ENCODE measurements at regions of chr11 and their contacts with region 1.

Region 1: GRCh38 chr11:20127671-20128527 is 32.4 kb downstream of the DBX1 start:
- DNase-seq: peak in 1 of 2 donors; percentile 84
- H3K4me3 ChIP-seq: no peak overlapping the region
- H3K27ac ChIP-seq: peak overlapping the region in 1 of 2 donors; percentile 17
- H3K4me1 ChIP-seq: peaks cover 0 to 2% of the 10 kb centered on the region in 2 donors
- H3K27me3 ChIP-seq: no peaks in the 10 kb centered on the region
- CTCF ChIP-seq: peak; percentile 82 to 86 (median 84)

Region 2: GRCh38 chr11:19903620-19904069 is 224.3 kb before region 1 on chr11:
- intact Hi-C with region 1: loop called (anchors 5 kb)
- DNase-seq: peak in 1 of 2 donors; percentile 83
- H3K4me3 ChIP-seq: no peak overlapping the region
- H3K27ac ChIP-seq: peak overlapping the region; percentile 19 to 37
- H3K4me1 ChIP-seq: peaks cover 0 to 33% of the 10 kb centered on the region in 2 donors
- H3K27me3 ChIP-seq: no peaks in the 10 kb centered on the region
- CTCF ChIP-seq: peak; percentile 48 to 76 (median 71)

Region 3: DNA sequence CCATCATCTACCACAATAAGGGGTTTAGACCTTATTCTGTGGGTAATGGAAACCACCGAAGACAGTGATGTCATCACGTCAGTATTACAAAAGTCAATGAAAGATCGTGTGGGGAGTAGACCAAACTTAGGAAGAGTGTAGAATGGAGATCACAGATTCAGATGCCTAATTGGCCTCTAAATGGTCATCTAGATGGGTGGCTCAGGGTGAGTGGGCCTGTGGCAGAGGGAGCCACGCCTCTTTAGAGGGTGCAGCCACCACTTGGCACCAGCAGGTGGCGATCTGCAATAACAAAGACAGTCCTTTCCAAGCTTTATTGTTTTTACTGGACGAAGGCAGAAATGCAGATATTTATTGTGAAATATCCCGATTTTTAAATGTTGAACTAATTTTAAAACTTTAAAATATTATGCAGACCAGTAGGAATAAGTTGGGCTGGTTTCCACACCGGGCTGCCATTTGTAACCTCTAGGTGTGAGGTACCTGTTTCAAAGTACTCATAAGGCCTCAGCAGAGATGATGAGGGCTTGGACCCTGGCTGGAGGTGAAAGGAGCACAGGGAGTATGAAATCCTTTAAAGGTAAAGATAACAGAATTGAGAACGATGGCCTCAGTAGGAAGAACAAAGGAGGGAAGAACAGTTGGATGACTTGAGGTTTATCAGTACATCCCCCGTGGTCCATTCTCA is 189.6 kb before region 1 on chr11:
- intact Hi-C with region 1: loop called (anchors 5 kb)
- DNase-seq: peak in 1 of 2 donors; percentile 78
- H3K4me3 ChIP-seq: no peak overlapping the region
- H3K27ac ChIP-seq: peak overlapping the region in 1 of 2 donors; percentile 15
- H3K4me1 ChIP-seq: peaks cover 11 to 28% of the 10 kb centered on the region in 2 donors
- H3K27me3 ChIP-seq: no peaks in the 10 kb centered on the region
- CTCF ChIP-seq: peak; percentile 43 to 85 (median 77)

Region 4: DNA sequence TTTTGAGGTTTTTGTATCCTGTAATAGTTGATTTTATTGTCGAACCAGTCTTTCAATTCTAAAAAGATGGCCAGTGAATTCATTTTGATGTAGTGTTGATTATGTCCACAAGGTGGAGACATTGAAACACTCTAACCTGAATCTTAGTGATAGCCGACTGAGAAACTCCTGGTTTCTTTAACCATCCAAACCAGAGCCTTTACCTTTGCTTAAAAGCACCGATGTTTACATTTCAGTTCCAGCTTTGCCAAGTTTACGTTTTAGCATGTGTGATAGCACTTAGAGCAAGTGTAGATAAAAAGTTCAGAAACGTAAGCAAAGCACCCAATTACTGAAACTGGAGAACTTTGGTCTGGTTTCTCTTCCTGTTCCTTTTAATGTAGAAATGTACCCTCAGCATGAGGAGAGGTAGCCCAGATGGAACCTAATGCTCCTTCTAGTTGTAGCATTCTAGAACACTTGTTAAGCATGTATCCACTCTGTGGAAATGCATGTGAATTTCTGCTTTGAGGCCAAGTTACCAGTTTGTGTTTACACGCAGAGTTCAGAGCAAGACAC is 176.3 kb before region 1 on chr11:
- intact Hi-C with region 1: loop called (anchors 2 kb)
- DNase-seq: no peak
- H3K4me3 ChIP-seq: peak overlapping the region in 1 of 2 donors; percentile 7
- H3K27ac ChIP-seq: peak overlapping the region in 1 of 2 donors; percentile 67
- H3K4me1 ChIP-seq: peaks cover 14 to 42% of the 10 kb centered on the region in 2 donors
- H3K27me3 ChIP-seq: no peaks in the 10 kb centered on the region
- CTCF ChIP-seq: peak; percentile 56 to 65 (median 62)

Region 5: DNA sequence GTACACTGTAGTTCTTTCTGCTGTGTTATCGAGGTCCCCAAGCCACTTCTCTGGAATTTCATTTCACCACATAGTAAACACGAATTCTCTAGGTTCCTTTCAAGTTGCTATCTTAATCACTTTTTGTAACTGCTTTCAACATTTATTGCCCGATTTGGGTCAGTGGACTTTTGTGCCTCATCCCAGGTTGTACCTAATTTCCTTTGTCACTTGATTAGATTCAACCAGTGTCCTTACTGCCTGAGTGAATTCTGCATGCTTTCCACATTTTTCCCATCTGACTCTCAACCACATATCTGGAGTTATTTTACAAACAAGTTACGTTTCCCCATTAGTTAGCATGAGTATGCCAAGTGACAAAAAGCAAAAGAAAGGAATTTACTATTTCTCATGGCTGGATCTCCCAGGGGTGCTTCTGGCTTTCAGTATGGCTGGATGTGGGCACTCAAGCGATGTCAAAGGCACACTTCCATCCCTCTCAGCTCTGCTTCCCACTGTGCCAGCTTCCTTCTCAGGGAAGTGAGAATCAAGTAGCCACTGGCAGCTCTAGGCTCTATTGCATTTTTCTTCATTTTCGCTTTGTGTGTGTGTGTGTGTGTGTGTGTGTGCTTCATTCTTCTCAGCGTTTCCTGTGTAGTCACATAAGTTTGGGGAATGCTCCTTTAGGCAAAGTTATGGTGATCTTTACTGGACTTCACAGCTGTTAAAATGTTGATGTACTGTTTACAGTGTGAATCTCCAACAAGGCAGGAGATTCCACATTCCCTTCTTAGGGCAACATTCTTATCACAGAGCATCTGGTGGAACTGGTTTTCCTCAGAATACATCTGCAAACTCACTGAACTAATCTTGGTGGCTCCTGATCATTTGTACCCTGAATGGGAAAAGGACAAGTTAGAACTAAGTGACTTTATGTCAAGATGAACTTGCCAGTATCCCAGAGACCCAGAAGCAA is 96.5 kb before region 1 on chr11:
- intact Hi-C with region 1: no loop called
- DNase-seq: no peak
- H3K4me3 ChIP-seq: no peak overlapping the region
- H3K27ac ChIP-seq: no peak overlapping the region
- H3K4me1 ChIP-seq: peaks cover 11 to 44% of the 10 kb centered on the region in 2 donors
- H3K27me3 ChIP-seq: no peaks in the 10 kb centered on the region
- CTCF ChIP-seq: no peak

Region 6: DNA sequence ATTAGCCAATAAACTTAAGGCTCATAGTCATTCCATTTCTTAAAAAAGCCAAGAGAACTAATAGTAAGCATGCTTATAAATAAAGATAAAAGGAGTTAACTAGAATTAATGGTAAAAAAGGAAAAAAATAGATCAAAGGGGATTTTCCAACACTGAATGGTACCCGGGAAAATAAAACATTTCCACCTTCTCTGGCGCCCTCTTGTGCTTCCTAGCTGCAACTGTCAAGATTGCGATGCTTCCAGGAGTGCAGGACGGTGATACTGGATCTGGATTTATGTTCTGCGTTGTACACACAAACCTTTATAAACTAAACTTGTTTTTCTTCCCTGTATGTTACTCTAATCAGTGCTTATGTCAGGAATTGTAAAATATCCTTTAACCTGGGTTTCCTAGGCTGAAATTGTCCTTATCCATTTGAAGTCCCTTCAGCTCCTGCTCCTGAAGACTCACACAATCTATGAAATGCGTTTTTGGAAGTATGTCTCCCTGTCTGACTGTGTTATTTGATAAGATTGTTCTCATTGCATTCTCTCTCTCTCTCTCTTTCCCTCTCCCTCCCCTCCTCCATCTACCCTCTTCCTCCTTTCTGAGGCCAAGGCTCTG is 226.0 kb after region 1 on chr11:
- intact Hi-C with region 1: loop called (anchors 2 kb)
- DNase-seq: no peak
- H3K4me3 ChIP-seq: no peak overlapping the region
- H3K27ac ChIP-seq: no peak overlapping the region
- H3K4me1 ChIP-seq: no peaks in the 10 kb centered on the region
- H3K27me3 ChIP-seq: no peaks in the 10 kb centered on the region
- CTCF ChIP-seq: peak; percentile 28 to 78 (median 75)